A673 (cell line): ENCODE measurements at regions of chr9 and their contacts with region 1.

Region 1: GRCh38 chr9:97921959-97922724 is at the start of gene TRMO:
- DNase-seq: peak; percentile 98
- H3K4me3 ChIP-seq: peak within 1 kb of the TSS; percentile 57
- H3K27ac ChIP-seq: peak within 1 kb of the TSS; percentile 97
- H3K4me1 ChIP-seq: peaks cover 7% of the 10 kb centered on the region
- H3K27me3 ChIP-seq: peaks cover 20% of the 10 kb centered on the region
- CTCF ChIP-seq: peak; percentile 81
- total RNA-seq, gene TRMO: 8.9 and 10.3 TPM in 2 replicates

Region 2: DNA sequence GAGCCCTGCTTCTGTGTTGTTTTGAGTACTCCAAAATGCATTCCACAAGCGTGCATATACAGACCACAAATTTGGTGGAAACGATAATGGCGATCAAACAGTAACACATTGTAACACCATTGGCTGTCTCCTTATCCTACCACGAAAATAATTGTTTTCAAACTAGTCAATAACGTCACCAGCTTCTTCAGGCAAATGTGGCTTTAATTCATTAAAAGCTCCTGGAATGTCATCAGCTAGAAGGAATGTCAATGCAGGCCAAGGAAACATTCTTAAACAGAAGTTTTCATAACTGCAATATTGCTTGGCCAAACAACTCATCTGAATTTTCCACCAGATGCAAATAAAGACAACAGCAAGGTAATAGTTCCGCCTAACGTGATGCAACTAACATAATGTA is 153.4 kb before region 1 on chr9:
- CTCF ChIA-PET with region 1: no interaction called
- POLR2A ChIA-PET with region 1: no interaction called
- intact Hi-C with region 1: no loop called
- DNase-seq: no peak
- H3K4me3 ChIP-seq: no peak overlapping the region
- H3K27ac ChIP-seq: no peak overlapping the region
- H3K4me1 ChIP-seq: no peaks in the 10 kb centered on the region
- H3K27me3 ChIP-seq: peaks cover 2% of the 10 kb centered on the region
- CTCF ChIP-seq: no peak

Region 3: DNA sequence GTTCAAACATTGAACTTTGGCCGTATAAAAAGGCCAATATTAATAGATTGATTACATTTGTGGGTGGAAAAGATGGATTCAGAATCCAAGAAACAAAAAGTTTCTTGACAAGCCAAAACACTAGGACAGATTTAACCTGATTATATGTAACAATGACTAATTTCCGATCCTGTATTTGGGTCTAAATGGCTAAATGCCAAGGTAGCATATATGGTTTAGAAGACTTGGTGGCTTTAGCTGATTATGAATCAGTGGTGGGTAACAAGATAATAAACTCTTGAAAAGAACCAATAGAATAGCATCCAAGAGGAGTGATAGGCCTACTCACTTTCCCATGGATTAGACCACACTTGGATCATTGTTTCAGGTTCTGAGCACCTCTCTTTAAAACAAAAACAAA is 39.2 kb after region 1 on chr9:
- CTCF ChIA-PET with region 1: no interaction called
- POLR2A ChIA-PET with region 1: interaction called, 12 read pairs
- intact Hi-C with region 1: no loop called
- DNase-seq: no peak
- H3K4me3 ChIP-seq: no peak overlapping the region
- H3K27ac ChIP-seq: no peak overlapping the region
- H3K4me1 ChIP-seq: no peaks in the 10 kb centered on the region
- H3K27me3 ChIP-seq: peaks cover 20% of the 10 kb centered on the region
- CTCF ChIP-seq: no peak

Region 4: GRCh38 chr9:97982683-97983588 is 60.8 kb after region 1 on chr9 and contains the start of gene ANP32B:
- CTCF ChIA-PET with region 1: interaction called, 14 read pairs
- POLR2A ChIA-PET with region 1: interaction called, 3 read pairs
- intact Hi-C with region 1: loop called (anchors 2 kb)
- DNase-seq: peak; percentile 96
- H3K4me3 ChIP-seq: peak within 1 kb of the TSS; percentile 92
- H3K27ac ChIP-seq: peak within 1 kb of the TSS; percentile 99
- H3K4me1 ChIP-seq: peaks cover 47% of the 10 kb centered on the region
- H3K27me3 ChIP-seq: no peaks in the 10 kb centered on the region
- CTCF ChIP-seq: peak; percentile 66
- total RNA-seq, gene ANP32B: 237 and 246 TPM in 2 replicates

Region 5: GRCh38 chr9:98034593-98035546 is 112.7 kb after region 1 on chr9:
- CTCF ChIA-PET with region 1: interaction called, 19 read pairs
- POLR2A ChIA-PET with region 1: no interaction called
- intact Hi-C with region 1: loop called (anchors 1 kb)
- DNase-seq: peak; percentile 86
- H3K4me3 ChIP-seq: no peak overlapping the region
- H3K27ac ChIP-seq: no peak overlapping the region
- H3K4me1 ChIP-seq: no peaks in the 10 kb centered on the region
- H3K27me3 ChIP-seq: no peaks in the 10 kb centered on the region
- CTCF ChIP-seq: peak; percentile 91

Region 6: DNA sequence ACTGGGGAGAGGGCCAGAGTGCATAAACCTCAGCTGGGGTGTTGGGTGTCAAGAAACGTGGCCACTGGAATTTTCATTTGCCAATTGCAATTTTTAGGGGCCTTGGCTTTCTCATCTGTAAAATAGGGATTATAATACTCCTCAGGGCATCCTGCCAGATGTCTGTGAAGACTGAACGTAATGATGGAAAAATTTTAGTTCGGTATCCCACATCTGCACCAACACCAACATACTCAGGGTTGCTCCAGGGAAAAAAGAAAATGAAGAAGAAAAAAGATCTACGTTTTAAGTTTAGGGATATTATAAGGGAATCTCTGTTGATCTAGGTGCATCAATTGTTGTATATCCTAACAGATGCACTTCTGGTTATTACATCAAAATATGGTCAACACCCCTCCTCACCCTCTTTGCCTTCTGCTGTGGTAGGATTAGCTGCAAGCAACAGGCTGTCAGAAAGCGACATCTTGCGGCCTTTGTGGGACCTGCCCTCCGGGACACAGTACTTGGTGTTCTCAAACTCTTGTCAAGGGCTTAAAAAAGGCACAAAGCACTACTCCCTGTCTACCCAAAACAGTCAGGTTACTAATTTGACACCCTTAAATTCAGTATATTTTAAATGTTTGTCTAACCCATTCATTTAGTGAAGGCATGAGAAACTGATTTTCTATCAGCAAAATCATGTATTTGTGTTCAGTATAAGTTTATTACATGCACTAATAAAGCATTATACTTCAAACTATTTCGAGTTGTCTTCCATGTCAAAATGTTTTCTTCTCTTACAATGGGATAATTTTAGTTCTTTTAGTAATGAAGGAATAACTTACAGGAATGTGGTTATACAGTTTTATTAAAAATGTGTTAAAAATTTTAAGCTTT is 341.6 kb after region 1 on chr9:
- CTCF ChIA-PET with region 1: interaction called, 3 read pairs
- POLR2A ChIA-PET with region 1: no interaction called
- intact Hi-C with region 1: loop called (anchors 1 kb)
- DNase-seq: peak; percentile 85
- H3K4me3 ChIP-seq: no peak overlapping the region
- H3K27ac ChIP-seq: no peak overlapping the region
- H3K4me1 ChIP-seq: no peaks in the 10 kb centered on the region
- H3K27me3 ChIP-seq: no peaks in the 10 kb centered on the region
- CTCF ChIP-seq: peak; percentile 96